Activated T-helper 2 cell treated with anti-CD3 and anti-CD28 coated beads, Interferon-gamma antibody, Interleukin-2, Interleukin-4, amounts not matched to agents 10 μg/mL and 5 μg/mL and 100 μg/mL, durations not matched to agents 14 hours and 24 hours and 36 hours (primary cell): ENCODE measurements at regions of chr9 and their contacts with region 1.

Region 1: GRCh38 chr9:133023117-133023890 is 7.5 kb upstream of the GTF3C5 start:
- DNase-seq: peak; percentile 56
- H3K4me3 Mint-ChIP-seq: peak overlapping the region; percentile 33
- H3K27ac Mint-ChIP-seq: peak overlapping the region; percentile 35
- H3K4me1 Mint-ChIP-seq: peaks cover 18% of the 10 kb centered on the region
- H3K27me3 Mint-ChIP-seq: peaks cover 1% of the 10 kb centered on the region

Region 2: GRCh38 chr9:132944302-132945185 is 78.8 kb before region 1 on chr9 and contains the start of gene TSC1:
- intact Hi-C with region 1: loop called (anchors 2 kb)
- DNase-seq: peak; percentile 94
- H3K4me3 Mint-ChIP-seq: peak within 1 kb of the TSS; percentile 83
- H3K27ac Mint-ChIP-seq: peak within 1 kb of the TSS; percentile 94
- H3K4me1 Mint-ChIP-seq: peaks cover 15% of the 10 kb centered on the region
- H3K27me3 Mint-ChIP-seq: no peaks in the 10 kb centered on the region
- total RNA-seq, gene TSC1: 29.1 and 29.8 TPM in 2 replicates